ENCODE measurements at regions of chr11 and their contacts with region 1.

Region 1: GRCh38 chr11:12724301-12725046 is 50.3 kb downstream of the TEAD1 start:
- DNase-seq: peak; percentile 92
- ATAC-seq: peak; percentile 68
- H3K4me3 ChIP-seq: peak overlapping the region; percentile 21 to 50
- H3K27ac ChIP-seq: peak overlapping the region; percentile 83
- H3K4me1 ChIP-seq: peaks cover 92 to 100% of the 10 kb centered on the region in 2 experiments
- H3K27me3 ChIP-seq: no peaks in the 10 kb centered on the region
- CTCF ChIP-seq: no peak
- POLR2A ChIP-seq: no peak
- RAD21 ChIP-seq: peak; percentile 5; the same call in 1 of the 2 replicates

Region 2: DNA sequence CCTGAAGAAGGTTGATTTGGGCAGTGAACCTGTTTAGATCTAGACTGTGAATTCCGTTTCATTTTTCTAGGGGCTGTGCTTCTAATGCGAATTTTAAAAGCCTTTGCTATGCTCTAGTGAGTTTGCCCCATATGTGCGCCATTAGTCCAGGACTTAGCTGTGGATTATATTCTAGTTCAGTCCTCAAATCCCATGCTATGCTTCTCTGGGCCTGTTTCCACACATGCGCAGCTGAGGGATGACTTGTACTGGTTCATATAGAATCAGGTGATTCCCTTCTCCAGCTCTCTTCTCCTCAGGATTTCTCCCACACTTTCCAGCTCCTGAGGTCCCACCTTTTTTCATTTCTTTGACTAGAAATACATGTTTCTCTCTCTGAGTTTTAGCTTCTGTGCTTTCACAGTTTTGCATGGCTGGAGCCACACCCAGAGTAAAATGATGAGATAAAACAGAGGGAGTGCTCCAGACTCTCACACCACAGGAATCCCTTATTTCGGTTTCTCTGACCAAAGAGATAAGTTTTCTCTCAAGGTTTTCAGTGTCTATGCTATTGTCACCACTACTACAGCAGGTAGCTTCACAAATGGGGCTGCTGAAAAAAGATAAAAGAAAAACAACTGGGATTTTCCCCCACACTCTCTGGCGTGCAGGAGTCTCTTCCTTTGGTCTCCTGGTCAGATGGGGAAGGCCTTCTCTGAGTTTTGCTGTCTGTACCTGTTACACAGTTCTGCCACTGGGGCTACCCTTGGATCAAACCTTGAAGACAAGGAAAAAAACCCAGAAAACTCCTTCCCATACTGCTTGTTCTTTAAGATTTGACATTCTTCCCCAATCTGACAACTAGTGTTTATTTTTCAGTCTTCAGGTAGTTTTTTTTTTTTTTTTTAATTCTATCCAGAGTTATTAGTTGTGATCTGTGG is 146.5 kb before region 1 on chr11:
- CTCF ChIA-PET with region 1: no interaction called
- POLR2A ChIA-PET with region 1: no interaction called
- RAD21 ChIA-PET with region 1: no interaction called
- intact Hi-C with region 1: no loop called
- DNase-seq: no peak
- ATAC-seq: peak; percentile 79
- H3K4me3 ChIP-seq: no peak overlapping the region
- H3K27ac ChIP-seq: no peak overlapping the region
- H3K4me1 ChIP-seq: peaks cover 6 to 10% of the 10 kb centered on the region in 2 experiments; a peak in 3 of 4 replicates
- H3K27me3 ChIP-seq: no peaks in the 10 kb centered on the region
- CTCF ChIP-seq: peak in 2 of 3 experiments; percentile 31 to 35; a peak in 2 of 6 replicates
- POLR2A ChIP-seq: no peak
- RAD21 ChIP-seq: no peak

Region 3: DNA sequence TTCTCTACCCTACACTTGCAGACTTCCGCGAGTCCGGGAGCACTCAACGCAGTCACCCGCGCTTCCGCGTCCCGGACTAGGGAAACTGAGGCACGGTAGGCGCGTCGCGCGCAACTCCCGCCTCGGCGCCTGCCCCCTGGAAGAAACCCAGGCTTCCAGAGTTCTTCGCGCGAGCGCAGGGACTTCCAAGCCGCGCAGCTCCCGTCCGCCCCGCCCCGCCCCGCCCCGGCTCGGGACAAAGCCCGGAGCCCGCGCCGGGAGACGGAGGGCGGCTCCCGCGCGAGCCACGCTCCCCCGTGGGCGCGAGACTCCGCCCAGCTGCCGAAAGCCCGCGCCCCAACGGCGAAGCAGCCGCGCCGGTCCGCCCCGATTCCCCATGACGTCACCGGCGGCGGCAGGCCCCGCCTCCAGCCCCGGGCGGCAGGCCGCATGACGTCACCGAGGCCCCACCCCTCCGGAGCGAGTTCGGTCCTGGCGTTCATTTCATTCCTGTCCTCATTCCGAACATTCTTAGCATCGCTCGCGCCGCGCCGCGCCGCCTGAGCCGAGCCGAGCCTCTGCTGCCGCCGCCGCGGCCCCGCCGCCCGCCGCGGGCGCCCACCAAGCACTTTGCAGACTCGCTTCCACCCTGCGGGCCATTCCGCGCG is 50.4 kb before region 1 on chr11 and contains the start of gene TEAD1:
- CTCF ChIA-PET with region 1: no interaction called
- POLR2A ChIA-PET with region 1: no interaction called
- RAD21 ChIA-PET with region 1: no interaction called
- intact Hi-C with region 1: loop called (anchors 1 kb)
- DNase-seq: peak; percentile 74
- ATAC-seq: peak; percentile 86
- H3K4me3 ChIP-seq: peak within 1 kb of the TSS; percentile 68 to 69
- H3K27ac ChIP-seq: peak within 1 kb of the TSS; percentile 71
- H3K4me1 ChIP-seq: peaks cover 25 to 39% of the 10 kb centered on the region in 2 experiments
- H3K27me3 ChIP-seq: no peaks in the 10 kb centered on the region
- CTCF ChIP-seq: no peak
- POLR2A ChIP-seq: peak; percentile 48
- RAD21 ChIP-seq: peak; percentile 9; the same call in 1 of the 2 replicates
- total RNA-seq, gene TEAD1: 103 TPM

Region 4: DNA sequence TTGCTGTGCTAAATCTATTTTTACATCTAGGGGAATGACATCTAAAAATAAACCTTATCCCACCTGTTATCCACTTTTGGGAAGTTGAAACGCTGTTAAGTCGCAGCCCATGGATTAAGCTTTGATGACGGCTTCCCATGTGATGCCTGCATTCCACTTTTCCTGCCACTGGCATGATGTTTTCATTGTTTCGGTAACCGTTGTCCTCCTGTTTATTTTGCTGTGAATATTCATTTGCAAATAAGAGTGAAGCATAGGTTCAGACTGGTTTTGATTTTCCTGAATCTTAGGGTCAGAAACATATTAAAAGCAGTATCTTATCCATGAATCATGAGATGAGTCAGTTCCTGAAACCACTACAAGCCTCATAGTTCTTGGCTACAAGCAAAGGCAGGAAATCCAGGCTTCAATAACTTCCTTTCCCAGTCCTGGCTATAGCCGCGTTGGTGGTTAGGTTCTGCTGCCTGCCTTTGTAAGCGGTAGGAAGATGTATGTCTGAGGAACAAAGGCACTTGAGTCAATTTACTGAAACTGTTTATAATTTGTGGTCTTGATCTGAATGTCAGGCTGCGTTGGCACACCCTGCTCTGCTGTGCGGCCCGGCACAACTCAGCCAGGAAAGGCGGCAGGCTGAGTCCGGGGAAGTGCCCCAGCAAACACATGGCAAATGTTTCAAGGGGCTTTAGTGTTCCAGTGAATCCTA is 30.8 kb before region 1 on chr11:
- CTCF ChIA-PET with region 1: no interaction called
- POLR2A ChIA-PET with region 1: interaction called, 5 read pairs
- RAD21 ChIA-PET with region 1: interaction called in 1 of 2 experiments, 3 read pairs
- intact Hi-C with region 1: loop called (anchors 5 kb)
- DNase-seq: peak; percentile 96
- ATAC-seq: peak; percentile 83
- H3K4me3 ChIP-seq: peak overlapping the region; percentile 19 to 47
- H3K27ac ChIP-seq: peak overlapping the region; percentile 92
- H3K4me1 ChIP-seq: peaks cover 91 to 99% of the 10 kb centered on the region in 2 experiments
- H3K27me3 ChIP-seq: no peaks in the 10 kb centered on the region
- CTCF ChIP-seq: no peak
- POLR2A ChIP-seq: no peak
- RAD21 ChIP-seq: peak; percentile 43

Region 5: GRCh38 chr11:12802418-12803085 is 78.1 kb after region 1 on chr11:
- CTCF ChIA-PET with region 1: no interaction called
- POLR2A ChIA-PET with region 1: no interaction called
- RAD21 ChIA-PET with region 1: no interaction called
- intact Hi-C with region 1: loop called (anchors 5 kb)
- DNase-seq: peak; percentile 97
- ATAC-seq: peak; percentile 79
- H3K4me3 ChIP-seq: peak overlapping the region; percentile 4 to 33
- H3K27ac ChIP-seq: peak overlapping the region; percentile 88
- H3K4me1 ChIP-seq: peaks cover 91 to 98% of the 10 kb centered on the region in 2 experiments
- H3K27me3 ChIP-seq: no peaks in the 10 kb centered on the region
- CTCF ChIP-seq: no peak
- POLR2A ChIP-seq: no peak
- RAD21 ChIP-seq: peak; percentile 39

Region 6: DNA sequence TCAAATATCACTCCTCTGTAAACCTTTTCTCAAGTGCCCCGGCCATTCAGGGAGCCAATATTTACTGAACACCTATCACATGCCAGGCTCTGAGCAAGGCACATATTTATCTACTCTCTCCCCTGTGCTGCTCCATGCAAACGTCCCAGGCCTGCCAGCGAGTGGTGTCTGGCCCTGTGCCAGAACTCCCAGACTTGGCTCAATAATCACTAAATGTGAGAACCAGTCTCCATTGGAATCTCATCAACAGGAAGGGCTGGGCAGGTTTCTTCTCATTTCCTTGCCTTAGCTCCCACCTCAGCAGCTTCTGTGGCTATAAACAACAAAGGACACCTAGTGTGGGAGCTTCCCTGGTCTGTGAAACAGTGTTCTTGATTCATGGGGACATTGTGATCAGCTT is 306.4 kb after region 1 on chr11:
- CTCF ChIA-PET with region 1: no interaction called
- POLR2A ChIA-PET with region 1: no interaction called
- RAD21 ChIA-PET with region 1: no interaction called
- intact Hi-C with region 1: no loop called
- DNase-seq: no peak
- ATAC-seq: no peak
- H3K4me3 ChIP-seq: no peak overlapping the region
- H3K27ac ChIP-seq: no peak overlapping the region
- H3K4me1 ChIP-seq: no peaks in the 10 kb centered on the region
- H3K27me3 ChIP-seq: no peaks in the 10 kb centered on the region
- CTCF ChIP-seq: no peak
- POLR2A ChIP-seq: no peak
- RAD21 ChIP-seq: no peak

Measured in HCT116 (cell line).